ENCODE measurements at regions of chr5 and their contacts with region 1.

Region 1: GRCh38 chr5:149960272-149961185 is at the start of gene SLC26A2:
- DNase-seq: peak; percentile 94
- H3K4me3 Mint-ChIP-seq: peak within 1 kb of the TSS; percentile 89
- H3K27ac Mint-ChIP-seq: peak within 1 kb of the TSS; percentile 99
- H3K4me1 Mint-ChIP-seq: peaks cover 33% of the 10 kb centered on the region
- H3K27me3 Mint-ChIP-seq: no peaks in the 10 kb centered on the region
- total RNA-seq, gene SLC26A2: 7.7 and 8.0 TPM in 2 replicates

Region 2: GRCh38 chr5:149345147-149345875 is 615.2 kb before region 1 on chr5 and contains the start of gene GRPEL2:
- intact Hi-C with region 1: loop called (anchors 5 kb)
- DNase-seq: peak; percentile 88
- H3K4me3 Mint-ChIP-seq: peak within 1 kb of the TSS; percentile 98
- H3K27ac Mint-ChIP-seq: peak within 1 kb of the TSS; percentile 94
- H3K4me1 Mint-ChIP-seq: peaks cover 42% of the 10 kb centered on the region
- H3K27me3 Mint-ChIP-seq: peaks cover 1% of the 10 kb centered on the region
- total RNA-seq, gene GRPEL2: 22.5 TPM in 2 replicates

Region 3: GRCh38 chr5:149731639-149732323 is 228.7 kb before region 1 on chr5:
- intact Hi-C with region 1: loop called (anchors 1 kb)
- DNase-seq: peak; percentile 44
- H3K4me3 Mint-ChIP-seq: peak overlapping the region; percentile 82
- H3K27ac Mint-ChIP-seq: no peak overlapping the region
- H3K4me1 Mint-ChIP-seq: peaks cover 2% of the 10 kb centered on the region
- H3K27me3 Mint-ChIP-seq: peaks cover 15% of the 10 kb centered on the region

Region 4: GRCh38 chr5:149834246-149834855 is 126.2 kb before region 1 on chr5:
- intact Hi-C with region 1: loop called (anchors 1 kb)
- DNase-seq: peak; percentile 33
- H3K4me3 Mint-ChIP-seq: no peak overlapping the region
- H3K27ac Mint-ChIP-seq: no peak overlapping the region
- H3K4me1 Mint-ChIP-seq: peaks cover 6% of the 10 kb centered on the region
- H3K27me3 Mint-ChIP-seq: no peaks in the 10 kb centered on the region

Region 5: DNA sequence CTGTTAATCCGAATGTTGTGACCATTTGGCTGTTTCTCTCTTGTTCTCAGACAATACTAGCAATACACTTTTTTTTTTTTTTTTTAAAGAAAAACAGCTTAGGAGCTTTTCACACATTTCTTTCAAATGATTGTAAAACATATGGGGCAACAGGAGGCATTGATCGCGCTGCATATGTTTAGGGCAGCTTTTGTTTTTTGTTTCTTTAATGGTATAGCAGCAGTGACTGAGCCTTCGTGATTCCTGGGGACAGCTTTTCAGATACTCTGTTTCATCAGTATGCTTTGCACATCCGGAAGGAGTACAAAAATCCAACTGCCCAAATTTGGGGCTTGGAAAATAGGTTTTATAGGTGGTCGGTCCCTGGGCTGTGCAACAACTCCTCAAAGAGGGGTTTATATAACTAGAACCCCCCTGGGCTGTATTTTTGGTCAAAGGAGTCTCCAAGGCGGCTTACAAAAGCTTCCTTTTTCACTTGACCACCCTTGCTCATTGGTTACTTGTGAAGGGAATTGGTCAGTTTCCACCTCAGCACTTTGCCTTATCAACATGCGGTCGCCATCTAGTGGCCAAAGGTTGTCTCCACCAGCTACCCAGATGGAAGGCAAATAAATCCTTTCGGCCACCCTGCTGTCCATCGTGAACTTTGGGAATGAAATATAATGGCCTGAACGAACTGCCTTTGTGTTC is 107.7 kb before region 1 on chr5:
- intact Hi-C with region 1: loop called (anchors 5 kb)
- DNase-seq: no peak
- H3K4me3 Mint-ChIP-seq: no peak overlapping the region
- H3K27ac Mint-ChIP-seq: no peak overlapping the region
- H3K4me1 Mint-ChIP-seq: no peaks in the 10 kb centered on the region
- H3K27me3 Mint-ChIP-seq: no peaks in the 10 kb centered on the region

Region 6: GRCh38 chr5:149902177-149902576 is 58.4 kb before region 1 on chr5:
- intact Hi-C with region 1: no loop called
- DNase-seq: no peak
- H3K4me3 Mint-ChIP-seq: no peak overlapping the region
- H3K27ac Mint-ChIP-seq: no peak overlapping the region
- H3K4me1 Mint-ChIP-seq: peaks cover 14% of the 10 kb centered on the region
- H3K27me3 Mint-ChIP-seq: peaks cover 16% of the 10 kb centered on the region

Region 7: DNA sequence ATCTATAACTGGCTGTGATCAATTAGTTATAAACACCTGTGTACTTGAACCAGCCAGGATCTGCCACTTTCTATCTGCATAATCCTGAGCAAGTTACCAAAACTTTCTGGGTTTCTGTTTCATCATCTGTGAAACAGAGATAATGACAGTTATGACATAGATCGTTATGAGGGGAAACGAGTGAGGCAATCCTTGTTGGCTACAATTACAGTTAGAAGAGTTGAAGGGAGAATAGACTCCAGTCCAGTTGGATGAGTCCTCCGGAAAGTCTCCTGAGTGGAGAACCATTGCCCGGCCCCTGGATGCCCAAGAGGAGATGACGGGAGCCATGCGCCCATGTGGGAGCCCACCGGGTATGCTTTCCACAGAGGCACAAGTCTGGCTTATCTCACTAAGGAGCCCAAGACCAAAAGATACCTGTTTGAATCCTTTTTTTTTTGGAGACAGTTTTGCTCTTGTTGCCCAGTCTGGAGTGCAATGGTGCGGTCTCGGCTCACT is 20.4 kb before region 1 on chr5:
- intact Hi-C with region 1: loop called (anchors 1 kb)
- DNase-seq: no peak
- H3K4me3 Mint-ChIP-seq: no peak overlapping the region
- H3K27ac Mint-ChIP-seq: peak overlapping the region; percentile 23
- H3K4me1 Mint-ChIP-seq: peaks cover 13% of the 10 kb centered on the region
- H3K27me3 Mint-ChIP-seq: peaks cover 3% of the 10 kb centered on the region

Region 8: DNA sequence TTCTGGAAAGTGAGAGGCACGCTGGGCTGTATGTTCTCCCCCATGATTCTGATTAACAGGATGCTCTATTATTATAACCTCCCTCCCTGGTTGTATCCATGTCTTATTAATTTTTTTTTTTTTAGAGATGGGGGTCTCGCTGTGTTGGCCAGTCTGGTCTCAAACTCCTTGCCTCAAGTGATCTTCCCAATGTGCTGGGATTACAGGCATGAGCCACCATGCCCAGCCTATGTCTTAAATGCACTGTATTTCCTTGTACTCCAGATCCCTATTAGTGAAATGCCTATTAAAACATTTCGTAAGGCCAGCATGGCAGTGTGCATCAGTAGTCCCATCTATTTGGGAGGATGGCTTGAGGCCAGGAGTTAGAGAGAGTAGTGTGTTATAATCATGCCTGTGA is 32.9 kb after region 1 on chr5:
- intact Hi-C with region 1: no loop called
- DNase-seq: no peak
- H3K4me3 Mint-ChIP-seq: no peak overlapping the region
- H3K27ac Mint-ChIP-seq: no peak overlapping the region
- H3K4me1 Mint-ChIP-seq: peaks cover 4% of the 10 kb centered on the region
- H3K27me3 Mint-ChIP-seq: no peaks in the 10 kb centered on the region

Region 9: GRCh38 chr5:150066901-150067396 is 106.4 kb after region 1 on chr5:
- intact Hi-C with region 1: no loop called
- DNase-seq: no peak
- H3K4me3 Mint-ChIP-seq: no peak overlapping the region
- H3K27ac Mint-ChIP-seq: peak overlapping the region; percentile 46
- H3K4me1 Mint-ChIP-seq: peaks cover 22% of the 10 kb centered on the region
- H3K27me3 Mint-ChIP-seq: peaks cover 1% of the 10 kb centered on the region

Measured in activated T-helper 2 cell treated with anti-CD3 and anti-CD28 coated beads, Interferon-gamma antibody, Interleukin-2, Interleukin-4, amounts not matched to agents 10 μg/mL and 5 μg/mL and 100 μg/mL, durations not matched to agents 14 hours and 24 hours and 36 hours (primary cell).